Right ventricle myocardium inferior (tissue), 1 donor: ENCODE measurements at regions of chr5 and their contacts with region 1.

Region 1: DNA sequence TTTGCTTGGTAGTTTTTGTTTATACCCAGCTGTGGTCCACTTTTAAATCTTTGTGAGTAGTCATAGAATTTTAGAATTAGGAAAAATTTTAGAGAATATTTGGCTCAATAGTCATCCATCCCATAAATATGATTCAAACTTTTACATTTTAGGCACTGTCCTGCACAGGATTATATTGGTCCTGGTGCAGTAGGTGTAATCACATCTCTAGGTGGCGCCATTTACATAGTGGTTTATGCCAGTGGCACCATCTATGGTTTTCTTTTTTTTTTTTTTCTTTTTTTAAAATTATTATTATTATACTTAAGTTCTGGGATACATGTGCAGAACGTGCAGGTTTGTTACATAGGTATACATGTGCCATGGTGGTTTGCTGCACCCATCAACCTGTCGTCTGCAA is 260.7 kb upstream of the KCNN2 start:
- DNase-seq: no peak
- ATAC-seq: no peak

Region 2: DNA sequence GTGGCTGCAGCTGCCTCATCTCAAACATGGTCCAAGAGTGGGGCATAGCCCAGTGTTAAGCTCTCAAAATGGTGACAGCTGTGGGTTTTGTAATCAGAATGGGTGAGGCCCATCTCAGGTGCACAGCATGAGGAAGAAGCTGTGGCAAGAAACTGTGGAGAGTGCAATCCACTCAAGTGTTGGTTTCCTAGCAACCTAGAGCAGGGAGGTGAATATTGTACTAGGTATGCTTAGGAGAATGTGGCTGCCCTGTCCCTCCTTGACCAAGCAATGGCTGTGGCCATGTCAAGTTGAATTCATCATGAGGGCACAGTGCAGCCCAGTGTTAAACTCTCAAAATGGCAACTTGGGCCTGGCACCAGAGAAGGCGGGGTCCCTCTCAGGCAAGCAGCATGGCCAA is 100.2 kb after region 1 on chr5:
- intact Hi-C with region 1: loop called (anchors 10 kb)
- DNase-seq: no peak
- ATAC-seq: no peak

Region 3: DNA sequence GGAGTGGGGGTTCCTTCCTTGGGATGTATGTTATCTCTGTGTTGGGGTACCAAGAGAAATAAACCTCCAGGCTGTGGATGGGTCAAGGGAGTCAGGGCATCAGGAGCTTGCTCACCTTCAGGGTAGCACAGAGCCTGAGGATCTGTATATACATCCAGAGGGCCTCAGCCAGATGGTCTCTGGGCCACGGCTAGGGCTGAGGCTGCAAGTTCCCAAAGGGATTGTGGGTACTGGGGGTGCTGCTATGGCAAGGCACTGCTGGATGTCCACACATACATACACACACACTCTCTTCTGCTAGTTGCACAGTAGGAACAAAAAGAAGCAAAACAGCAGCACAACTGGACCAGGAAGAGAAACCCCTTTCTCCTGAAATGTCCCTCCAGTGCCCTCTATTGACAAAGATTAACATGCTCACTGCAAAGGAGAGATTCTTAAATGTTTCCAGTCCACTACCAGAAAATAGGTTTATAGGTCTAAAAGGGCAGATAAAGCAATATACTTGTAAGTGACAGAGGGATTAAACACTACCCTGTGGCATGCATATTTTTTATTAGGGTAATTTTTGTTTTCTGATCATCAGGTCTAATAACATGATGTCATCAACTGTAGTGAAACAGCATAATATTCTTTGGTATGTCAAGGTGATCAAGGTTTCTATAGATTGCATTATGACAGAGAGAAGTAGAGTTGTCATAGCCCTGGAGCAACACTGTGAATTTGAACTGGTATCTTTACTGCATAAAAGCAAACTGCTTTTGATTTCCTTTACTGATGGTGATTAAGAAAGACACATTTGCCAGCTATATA is 204.5 kb after region 1 on chr5:
- intact Hi-C with region 1: loop called (anchors 5 kb)
- DNase-seq: no peak
- ATAC-seq: no peak